Gastrocnemius medialis (tissue), 4 donors: ENCODE measurements at regions of chr7 and their contacts with region 1.

Region 1: GRCh38 chr7:116236020-116236630 is 25.8 kb downstream of the TES start:
- DNase-seq: peak in 1 of 2 donors; percentile 16
- ATAC-seq: no peak
- H3K4me3 ChIP-seq: no peak overlapping the region
- H3K27ac ChIP-seq: no peak overlapping the region
- H3K4me1 ChIP-seq: peaks cover 7 to 9% of the 10 kb centered on the region in 2 donors
- H3K27me3 ChIP-seq: no peaks in the 10 kb centered on the region
- CTCF ChIP-seq: peak in 4 of 5 experiments; percentile 30 to 54 (median 46)
- POLR2A ChIP-seq: no peak

Region 2: DNA sequence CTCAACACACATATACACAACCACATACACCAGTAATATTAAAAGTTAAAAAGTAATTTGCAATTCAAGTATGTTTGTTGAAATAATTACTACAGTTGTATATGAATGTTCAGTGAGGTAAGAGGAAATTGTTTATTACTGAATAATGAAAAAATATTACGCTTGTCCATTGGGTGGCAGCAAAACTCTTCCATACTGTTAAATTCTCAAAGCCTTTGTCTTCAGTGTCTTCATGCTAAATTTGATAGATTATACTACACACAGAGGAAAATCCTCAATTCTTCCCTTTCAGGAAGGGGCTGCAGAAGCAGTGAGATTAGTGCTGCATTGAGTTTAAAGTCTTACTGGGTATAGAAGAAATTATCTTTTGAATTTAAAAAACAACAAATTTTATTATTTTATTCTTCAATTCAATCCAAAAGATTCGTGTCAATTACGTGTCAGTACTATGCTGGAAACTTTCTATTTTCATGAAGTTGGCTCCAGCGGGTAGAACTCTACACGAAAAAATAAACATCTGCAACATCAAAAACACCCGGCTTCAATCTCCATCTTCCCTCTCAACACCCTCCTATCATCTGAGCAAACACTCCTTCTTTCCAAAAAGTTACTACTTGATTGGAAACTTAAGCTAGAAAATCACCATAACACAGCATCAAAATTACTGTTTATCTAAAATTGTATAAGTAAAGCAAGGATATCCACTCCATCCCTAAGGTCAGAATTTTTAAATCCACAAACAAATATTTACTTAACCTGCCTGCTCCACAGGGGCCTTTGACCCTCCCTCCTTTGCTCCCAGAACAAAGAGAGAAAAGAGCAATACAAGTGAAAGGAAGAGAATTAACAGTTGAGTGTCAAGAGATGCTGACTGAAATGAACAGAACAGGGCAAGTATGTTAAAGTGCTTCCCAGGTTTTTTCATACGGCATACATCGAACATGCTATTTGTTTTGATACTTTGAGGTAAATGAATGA is 62.8 kb before region 1 on chr7:
- in situ Hi-C with region 1: loop called in 2 of 4 experiments (anchors 5 kb)
- intact Hi-C with region 1: loop called (anchors 2 kb)
- DNase-seq: no peak
- ATAC-seq: peak in 1 of 2 donors; percentile 46
- H3K4me3 ChIP-seq: no peak overlapping the region
- H3K27ac ChIP-seq: no peak overlapping the region
- H3K4me1 ChIP-seq: no peaks in the 10 kb centered on the region
- H3K27me3 ChIP-seq: no peaks in the 10 kb centered on the region
- CTCF ChIP-seq: peak in 4 of 5 experiments; percentile 20 to 53 (median 42)
- POLR2A ChIP-seq: no peak

Region 3: DNA sequence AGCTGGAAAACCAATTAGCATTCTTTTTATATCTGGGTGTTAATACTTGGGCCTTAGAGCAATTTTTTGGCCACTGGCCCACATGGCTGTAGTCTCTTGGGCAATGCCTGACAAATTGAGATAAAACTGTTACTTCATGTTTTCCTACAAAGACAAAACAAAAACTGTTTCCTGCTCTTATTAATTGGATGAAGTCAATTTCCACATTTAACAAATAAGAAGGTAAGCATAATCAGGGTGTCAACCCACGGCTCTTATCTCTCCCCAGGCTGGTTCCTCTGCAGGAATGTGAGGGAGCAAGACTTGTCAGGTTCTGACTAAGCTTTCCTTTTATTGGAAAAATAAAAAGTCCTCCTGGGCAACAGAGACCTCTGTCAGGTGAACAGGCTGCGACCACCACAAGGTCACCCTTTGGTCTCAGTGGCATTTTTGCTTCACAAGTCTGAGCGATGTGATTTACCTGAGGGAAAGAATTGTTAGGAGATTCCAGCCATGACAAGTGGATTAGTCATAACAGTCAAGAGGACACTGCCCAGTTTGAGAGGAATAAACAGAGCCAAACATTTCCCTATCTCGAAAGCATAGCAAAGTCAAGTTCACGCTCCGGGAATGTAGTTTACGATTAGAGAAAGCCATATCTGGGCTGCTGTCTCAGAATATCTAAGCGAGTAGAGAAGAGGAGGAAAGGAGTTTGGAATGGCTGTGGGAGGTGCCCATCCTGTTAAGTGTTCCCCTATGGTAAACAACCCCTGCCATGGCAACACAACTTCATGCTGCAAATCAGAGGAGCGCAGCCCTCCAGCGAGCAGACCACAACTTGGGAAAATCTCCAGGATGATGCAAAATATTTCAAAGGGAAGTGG is 118.7 kb after region 1 on chr7:
- in situ Hi-C with region 1: no loop called
- intact Hi-C with region 1: no loop called
- DNase-seq: no peak
- ATAC-seq: peak; percentile 64 to 71
- H3K4me3 ChIP-seq: peak overlapping the region in 3 of 4 donors; percentile 12 to 17 (median 15)
- H3K27ac ChIP-seq: peak overlapping the region; percentile 52 to 75 (median 64)
- H3K4me1 ChIP-seq: peaks cover 29 to 48% of the 10 kb centered on the region in 2 donors
- H3K27me3 ChIP-seq: no peaks in the 10 kb centered on the region
- CTCF ChIP-seq: no peak
- POLR2A ChIP-seq: no peak